Right ventricle myocardium superior (tissue), 1 donor: ENCODE measurements at regions of chr15 and their contacts with region 1.

Region 1: DNA sequence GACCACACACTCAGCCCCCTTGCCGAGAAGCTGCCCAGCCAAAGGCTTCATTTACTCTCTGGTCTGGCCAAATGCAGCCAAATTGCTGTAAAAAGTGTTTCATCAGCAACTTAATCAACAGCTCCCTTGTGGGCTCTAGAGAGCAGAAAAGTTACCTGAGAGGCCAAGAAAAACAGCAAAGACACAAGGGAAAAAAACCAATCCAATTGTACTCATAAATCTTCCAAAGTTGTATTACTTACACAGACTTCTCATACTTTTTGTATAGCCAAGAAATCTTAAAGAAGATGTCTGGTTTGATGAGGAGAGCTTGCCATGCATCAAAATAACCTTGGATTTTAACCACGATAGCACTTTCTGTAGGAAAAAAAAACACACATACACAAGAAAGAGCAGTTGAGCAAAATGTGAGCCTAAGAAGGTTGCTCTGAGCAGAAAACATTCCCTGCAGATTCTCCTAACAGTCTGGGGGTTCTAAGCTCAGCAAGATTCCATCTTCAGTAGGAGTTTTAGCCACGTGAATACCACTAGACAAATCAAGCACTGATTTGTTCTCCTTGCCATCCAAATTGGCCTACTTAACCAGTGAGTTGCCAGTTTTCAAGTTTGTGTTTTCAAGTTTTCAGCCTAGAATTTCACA is 120.0 kb downstream of the CYP19A1 start:
- DNase-seq: no peak
- ATAC-seq: no peak

Region 2: DNA sequence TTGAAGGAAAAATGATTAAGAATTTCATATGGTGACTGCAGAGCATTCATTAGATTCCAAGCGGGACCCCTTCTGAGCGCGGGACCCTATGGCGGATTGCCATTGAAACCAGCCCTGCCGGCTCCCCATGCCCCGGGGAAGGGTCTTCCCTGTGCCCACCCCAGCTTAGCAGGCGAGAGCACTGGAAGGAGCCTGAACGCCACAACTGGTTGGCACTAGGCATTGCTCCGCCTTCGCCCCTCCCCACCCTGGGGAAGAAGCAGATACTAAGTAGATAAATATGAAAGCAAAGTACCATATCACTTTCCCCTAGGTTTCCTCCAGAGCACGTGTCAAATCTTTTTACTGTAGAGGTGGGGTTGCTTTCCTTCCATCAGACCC is 49.3 kb after region 1 on chr15:
- intact Hi-C with region 1: loop called (anchors 10 kb)
- DNase-seq: no peak
- ATAC-seq: peak; percentile 45